ENCODE measurements at regions of chr4 and their contacts with region 1.

Region 1: GRCh38 chr4:18869166-18869565 is 847.6 kb upstream of the LCORL start:
- DNase-seq: no peak
- H3K4me3 ChIP-seq: no peak overlapping the region
- H3K27ac ChIP-seq: no peak overlapping the region
- H3K4me1 ChIP-seq: no peaks in the 10 kb centered on the region
- CTCF ChIP-seq: no peak

Region 2: GRCh38 chr4:18858229-18858922 is 10.8 kb before region 1 on chr4:
- CTCF ChIA-PET with region 1: no interaction called
- POLR2A ChIA-PET with region 1: interaction called, 15 read pairs
- intact Hi-C with region 1: no loop called
- DNase-seq: no peak
- H3K4me3 ChIP-seq: no peak overlapping the region
- H3K27ac ChIP-seq: no peak overlapping the region
- H3K4me1 ChIP-seq: peaks cover 19% of the 10 kb centered on the region
- CTCF ChIP-seq: no peak

Measured in OCI-LY7 (cell line).